IMR-90 (cell line): ENCODE measurements at regions of chr4 and their contacts with region 1.

Region 1: DNA sequence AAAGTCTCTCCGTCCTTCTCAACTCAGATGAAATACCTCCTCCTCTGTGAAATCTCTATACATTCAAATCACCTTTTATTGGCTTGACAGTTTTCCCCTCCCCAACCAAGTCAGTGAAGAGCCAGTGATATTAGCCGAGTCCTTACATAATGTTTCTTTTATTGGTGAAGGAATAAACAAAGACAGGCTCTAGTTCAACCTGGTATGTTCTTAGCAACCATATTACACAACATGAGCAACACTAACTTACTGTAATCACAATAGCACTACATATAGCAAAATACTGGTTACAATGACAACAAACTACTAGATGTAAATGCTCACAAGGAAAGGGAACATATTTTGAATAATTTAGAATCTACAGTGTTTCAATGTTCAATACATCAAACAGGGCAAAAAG is 19.9 kb downstream of the DHX15 start:
- DNase-seq: peak; percentile 60
- ATAC-seq: peak; percentile 21; the same call in 1 of the 2 replicates
- H3K4me3 ChIP-seq: no peak overlapping the region
- H3K27ac ChIP-seq: no peak overlapping the region
- H3K4me1 ChIP-seq: peaks cover 4% of the 10 kb centered on the region; the same call in 1 of the 2 replicates
- H3K27me3 ChIP-seq: no peaks in the 10 kb centered on the region
- CTCF ChIP-seq: no peak
- POLR2A ChIP-seq: no peak
- RAD21 ChIP-seq: no peak

Region 2: DNA sequence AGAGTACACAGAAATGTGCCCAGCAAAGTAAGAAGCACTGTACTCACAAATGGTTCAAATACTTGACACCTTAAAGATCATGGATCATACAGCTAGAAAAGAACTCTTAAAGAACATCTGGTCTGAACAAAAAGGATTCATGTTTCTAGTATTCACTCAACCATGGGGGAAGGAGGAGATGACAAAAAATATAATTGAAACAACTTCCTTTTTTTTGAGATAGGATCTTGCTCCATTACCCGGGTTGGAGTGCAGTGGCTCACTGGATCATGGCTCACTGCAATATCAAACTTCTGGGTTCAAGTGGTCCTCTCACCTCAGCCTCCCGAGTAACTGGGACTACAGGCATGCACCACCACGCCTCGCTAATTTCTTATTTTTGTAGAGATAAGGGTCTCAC is 13.9 kb after region 1 on chr4:
- CTCF ChIA-PET with region 1: interaction called, 3 read pairs
- POLR2A ChIA-PET with region 1: no interaction called
- dilution Hi-C with region 1: no loop called
- in situ Hi-C with region 1: no loop called
- intact Hi-C with region 1: loop called (anchors 2 kb)
- DNase-seq: no peak
- ATAC-seq: no peak
- H3K4me3 ChIP-seq: no peak overlapping the region
- H3K27ac ChIP-seq: peak overlapping the region; percentile 16; the same call in 1 of the 2 replicates
- H3K4me1 ChIP-seq: peaks cover 8% of the 10 kb centered on the region
- H3K27me3 ChIP-seq: no peaks in the 10 kb centered on the region
- CTCF ChIP-seq: no peak
- POLR2A ChIP-seq: no peak
- RAD21 ChIP-seq: no peak

Region 3: DNA sequence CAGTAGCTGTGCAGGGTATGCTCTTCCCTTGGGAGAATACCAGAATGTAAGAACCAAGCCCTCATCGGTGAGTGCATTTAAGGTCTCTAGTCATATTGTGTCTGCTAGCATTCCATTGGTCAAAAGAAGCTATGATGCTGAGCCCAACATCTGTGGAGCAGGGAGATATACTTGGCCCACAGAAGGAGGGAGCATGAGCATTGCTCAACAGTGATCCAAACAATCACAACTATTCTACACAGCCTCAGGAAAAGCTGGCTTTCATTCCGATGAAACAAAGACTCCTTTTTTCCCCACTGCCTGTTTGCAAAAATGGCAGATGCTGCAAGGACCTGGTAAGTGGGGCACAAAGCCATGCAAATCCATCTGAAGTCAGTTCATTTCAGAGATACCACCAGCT is 100.5 kb after region 1 on chr4:
- CTCF ChIA-PET with region 1: no interaction called
- POLR2A ChIA-PET with region 1: no interaction called
- dilution Hi-C with region 1: no loop called
- in situ Hi-C with region 1: no loop called
- intact Hi-C with region 1: no loop called
- DNase-seq: peak; percentile 55
- ATAC-seq: peak; percentile 96
- H3K4me3 ChIP-seq: no peak overlapping the region
- H3K27ac ChIP-seq: peak overlapping the region; percentile 72; the same call in 1 of the 2 replicates
- H3K4me1 ChIP-seq: peaks cover 5% of the 10 kb centered on the region
- H3K27me3 ChIP-seq: peaks cover 21% of the 10 kb centered on the region
- CTCF ChIP-seq: no peak
- POLR2A ChIP-seq: no peak
- RAD21 ChIP-seq: no peak